WTC11 (cell line): ENCODE measurements at regions of chr4 and their contacts with region 1.

Region 1: DNA sequence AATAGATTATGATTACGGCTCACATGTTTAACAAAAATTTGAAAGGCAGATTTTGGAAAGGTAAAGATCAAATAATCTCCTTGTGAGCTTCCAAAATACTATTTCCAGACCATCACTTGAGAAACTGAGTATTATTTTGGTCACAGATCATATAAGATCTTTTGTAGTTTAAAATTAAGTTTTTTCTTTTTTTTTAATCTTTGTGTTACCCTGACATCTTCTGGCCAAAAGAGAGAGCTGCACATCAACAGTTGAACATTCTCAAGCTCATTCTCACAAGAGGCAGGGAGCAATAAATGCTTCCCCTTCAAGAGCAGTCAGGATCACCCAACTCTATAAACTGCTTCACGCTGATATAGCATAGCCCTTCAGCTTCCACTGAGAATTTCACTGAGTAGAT is 15.9 kb downstream of the TMEM192 start:
- DNase-seq: no peak
- ATAC-seq: peak; percentile 83
- H3K4me3 Mint-ChIP-seq: no peak overlapping the region
- H3K27ac Mint-ChIP-seq: no peak overlapping the region
- H3K4me1 Mint-ChIP-seq: no peaks in the 10 kb centered on the region
- H3K27me3 Mint-ChIP-seq: no peaks in the 10 kb centered on the region
- CTCF ChIP-seq: peak; percentile 44

Region 2: DNA sequence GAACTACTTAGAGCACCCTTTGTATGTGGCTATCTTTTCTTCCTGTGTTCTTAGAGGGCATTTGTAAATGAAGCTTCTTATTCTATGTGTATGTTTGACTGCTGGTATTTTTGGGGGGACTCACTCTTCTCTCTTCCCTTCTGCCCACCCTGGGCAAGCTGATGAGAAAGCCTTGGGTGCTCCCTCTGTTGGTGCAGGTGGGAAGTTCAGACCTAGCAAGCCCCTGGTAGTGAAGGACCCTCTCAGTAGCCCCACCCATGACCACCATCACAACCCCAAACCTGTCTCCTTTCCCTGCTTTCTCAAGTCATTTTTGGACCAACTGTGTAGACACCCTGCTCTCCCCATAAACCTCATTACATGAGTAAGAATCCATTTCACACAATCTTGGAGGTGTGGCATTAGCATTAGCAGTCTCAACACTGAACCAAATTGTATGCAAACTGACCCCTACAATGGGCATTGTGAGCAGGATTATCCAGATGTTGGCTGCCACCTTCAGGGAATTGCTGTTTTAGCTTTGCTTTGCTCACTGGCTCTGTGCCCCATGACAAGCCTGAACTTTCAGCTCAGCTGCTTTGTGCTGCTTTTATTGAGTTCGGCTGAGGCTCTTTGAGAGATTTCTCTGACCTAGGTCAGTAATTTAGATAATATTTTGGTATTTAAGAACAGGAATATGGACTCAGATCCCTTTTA is 147.2 kb before region 1 on chr4:
- CTCF ChIA-PET with region 1: interaction called, 23 read pairs
- POLR2A ChIA-PET with region 1: no interaction called
- DNase-seq: peak; percentile 65
- ATAC-seq: peak; percentile 93
- H3K4me3 Mint-ChIP-seq: no peak overlapping the region
- H3K27ac Mint-ChIP-seq: no peak overlapping the region
- H3K4me1 Mint-ChIP-seq: peaks cover 9% of the 10 kb centered on the region
- H3K27me3 Mint-ChIP-seq: no peaks in the 10 kb centered on the region; the same call in 1 of the 2 replicates
- CTCF ChIP-seq: peak; percentile 47; the same call in 1 of the 2 replicates